ENCODE measurements at regions of chr2 and their contacts with region 1.

Region 1: GRCh38 chr2:196225213-196225612 is 53.8 kb upstream of the STK17B start:
- DNase-seq: no peak
- ATAC-seq: no peak
- H3K4me3 ChIP-seq: no peak overlapping the region
- H3K4me3 Mint-ChIP-seq: peak overlapping the region; percentile 7
- H3K27ac ChIP-seq: no peak overlapping the region
- H3K27ac Mint-ChIP-seq: peak overlapping the region; percentile 46
- H3K4me1 ChIP-seq: peaks cover 30% of the 10 kb centered on the region
- H3K4me1 Mint-ChIP-seq: peaks cover 89% of the 10 kb centered on the region
- H3K27me3 ChIP-seq: no peaks in the 10 kb centered on the region
- H3K27me3 Mint-ChIP-seq: no peaks in the 10 kb centered on the region
- CTCF ChIP-seq: no peak

Region 2: DNA sequence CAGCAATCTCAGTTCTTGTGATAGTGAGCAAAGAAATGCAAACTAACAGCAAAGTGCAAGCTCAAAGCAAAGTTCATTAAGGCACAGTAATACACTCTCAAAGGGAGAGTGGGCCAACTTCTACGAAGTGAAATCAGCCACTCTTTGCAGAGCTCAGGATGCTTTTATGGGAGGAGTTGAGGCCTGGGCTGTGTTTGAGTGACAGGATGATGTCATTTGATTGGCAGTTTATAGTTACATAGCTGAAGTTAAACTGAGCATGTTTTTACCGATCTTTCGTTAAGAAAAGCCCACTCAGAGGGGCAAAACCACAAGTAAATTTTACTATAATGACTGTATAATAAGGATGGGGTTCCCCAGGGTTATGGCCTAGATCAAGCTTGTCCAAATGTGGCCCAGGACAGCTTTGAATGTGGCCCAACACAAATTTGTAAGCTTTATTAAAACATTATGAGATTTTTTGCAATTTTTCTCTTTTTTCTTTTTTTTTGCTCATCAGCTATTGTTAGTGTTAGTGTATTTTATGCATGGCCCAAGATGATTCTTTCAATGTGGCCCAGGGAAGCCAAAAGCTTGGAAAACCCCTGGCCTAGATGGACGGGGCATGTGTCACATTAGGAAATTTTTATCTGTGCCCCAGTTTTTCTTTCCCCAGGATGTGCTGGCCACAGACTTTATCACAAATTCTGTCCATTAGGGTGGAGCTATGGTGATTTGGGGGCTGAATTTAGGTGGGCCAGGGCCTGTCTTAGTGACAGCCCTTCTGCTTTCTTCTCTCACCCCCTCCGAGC is 148.2 kb before region 1 on chr2:
- CTCF ChIA-PET with region 1: interaction called, 8 read pairs
- POLR2A ChIA-PET with region 1: interaction called, 19 read pairs
- intact Hi-C with region 1: loop called in 1 of 2 experiments (anchors 1 kb)
- DNase-seq: no peak
- ATAC-seq: no peak
- H3K4me3 ChIP-seq: no peak overlapping the region
- H3K4me3 Mint-ChIP-seq: no peak overlapping the region
- H3K27ac ChIP-seq: no peak overlapping the region
- H3K27ac Mint-ChIP-seq: no peak overlapping the region
- H3K4me1 ChIP-seq: peaks cover 9% of the 10 kb centered on the region
- H3K4me1 Mint-ChIP-seq: peaks cover 27% of the 10 kb centered on the region
- H3K27me3 ChIP-seq: no peaks in the 10 kb centered on the region
- H3K27me3 Mint-ChIP-seq: no peaks in the 10 kb centered on the region
- CTCF ChIP-seq: no peak

Region 3: DNA sequence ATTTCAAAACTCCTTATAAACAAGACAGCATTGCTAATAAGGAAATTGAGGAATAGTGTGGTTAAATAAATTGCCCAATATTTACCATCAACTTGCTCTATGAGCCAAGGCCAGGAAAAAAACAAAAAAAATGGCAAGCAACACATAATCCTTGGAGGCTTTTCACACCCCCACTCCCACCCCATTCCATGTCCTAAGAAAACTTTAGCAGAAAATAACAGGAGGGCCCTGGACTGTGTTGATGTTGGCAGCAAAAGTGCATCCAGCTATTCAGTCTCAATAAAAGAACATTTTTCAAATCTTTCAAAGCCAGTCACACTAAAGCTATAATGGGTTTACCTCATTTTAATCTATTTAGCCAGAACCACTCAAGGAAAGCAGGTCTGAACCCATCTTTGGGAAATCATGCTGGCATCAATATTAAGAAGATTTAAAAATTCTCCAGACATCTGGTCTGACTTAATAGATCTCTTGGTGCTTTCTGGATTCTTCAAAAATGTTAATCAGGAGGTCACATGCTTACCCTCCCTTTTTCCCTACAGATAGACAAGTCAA is 19.3 kb before region 1 on chr2:
- CTCF ChIA-PET with region 1: interaction called, 8 read pairs
- POLR2A ChIA-PET with region 1: interaction called, 19 read pairs
- intact Hi-C with region 1: loop called in 1 of 2 experiments (anchors 1 kb)
- DNase-seq: no peak
- ATAC-seq: no peak
- H3K4me3 ChIP-seq: no peak overlapping the region
- H3K4me3 Mint-ChIP-seq: no peak overlapping the region
- H3K27ac ChIP-seq: no peak overlapping the region
- H3K27ac Mint-ChIP-seq: peak overlapping the region; percentile 43
- H3K4me1 ChIP-seq: peaks cover 34% of the 10 kb centered on the region
- H3K4me1 Mint-ChIP-seq: peaks cover 45% of the 10 kb centered on the region
- H3K27me3 ChIP-seq: no peaks in the 10 kb centered on the region
- H3K27me3 Mint-ChIP-seq: no peaks in the 10 kb centered on the region
- CTCF ChIP-seq: no peak

Region 4: DNA sequence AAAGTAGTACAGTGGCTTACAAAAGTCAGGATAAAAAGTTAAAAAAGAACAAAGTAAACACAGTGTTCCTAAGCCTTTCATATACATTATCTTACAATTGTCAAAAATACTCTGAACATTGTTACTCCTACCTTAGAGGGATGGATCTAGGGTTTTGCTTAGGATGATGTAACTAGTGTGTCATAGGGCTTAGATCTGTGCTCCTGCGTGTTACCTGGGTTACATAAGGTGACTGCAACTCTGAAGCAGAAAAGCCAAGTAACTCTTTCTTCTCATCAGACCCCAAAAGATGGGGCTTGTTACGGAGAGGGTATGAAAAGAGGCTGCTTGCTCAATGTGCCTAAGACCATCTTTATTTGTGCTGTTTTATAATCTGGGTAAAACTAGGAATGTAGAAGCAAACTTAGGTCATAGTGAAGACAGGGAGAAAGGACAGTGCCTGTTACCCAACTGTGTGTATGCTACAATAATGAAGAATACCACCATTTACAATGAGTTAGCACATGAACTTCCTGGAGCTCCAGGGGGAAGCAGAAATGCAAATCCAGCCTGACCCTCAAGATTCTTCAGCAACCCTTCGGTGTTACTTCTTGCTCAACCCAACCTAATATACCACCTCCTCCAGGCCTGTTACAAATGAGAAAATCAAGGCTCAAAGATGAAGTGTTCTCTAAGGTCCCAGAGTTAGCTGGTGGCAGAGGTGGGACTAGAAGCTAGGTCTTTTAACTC is 11.8 kb before region 1 on chr2:
- CTCF ChIA-PET with region 1: interaction called, 8 read pairs
- POLR2A ChIA-PET with region 1: interaction called, 19 read pairs
- intact Hi-C with region 1: loop called (anchors 1 to 2 kb)
- DNase-seq: peak in 2 of 14 experiments; percentile 66 to 73
- ATAC-seq: no peak
- H3K4me3 ChIP-seq: no peak overlapping the region
- H3K4me3 Mint-ChIP-seq: peak overlapping the region; percentile 26
- H3K27ac ChIP-seq: peak overlapping the region; percentile 6 to 15
- H3K27ac Mint-ChIP-seq: peak overlapping the region; percentile 95
- H3K4me1 ChIP-seq: peaks cover 45% of the 10 kb centered on the region
- H3K4me1 Mint-ChIP-seq: peaks cover 88% of the 10 kb centered on the region
- H3K27me3 ChIP-seq: no peaks in the 10 kb centered on the region
- H3K27me3 Mint-ChIP-seq: no peaks in the 10 kb centered on the region
- CTCF ChIP-seq: no peak

Region 5: DNA sequence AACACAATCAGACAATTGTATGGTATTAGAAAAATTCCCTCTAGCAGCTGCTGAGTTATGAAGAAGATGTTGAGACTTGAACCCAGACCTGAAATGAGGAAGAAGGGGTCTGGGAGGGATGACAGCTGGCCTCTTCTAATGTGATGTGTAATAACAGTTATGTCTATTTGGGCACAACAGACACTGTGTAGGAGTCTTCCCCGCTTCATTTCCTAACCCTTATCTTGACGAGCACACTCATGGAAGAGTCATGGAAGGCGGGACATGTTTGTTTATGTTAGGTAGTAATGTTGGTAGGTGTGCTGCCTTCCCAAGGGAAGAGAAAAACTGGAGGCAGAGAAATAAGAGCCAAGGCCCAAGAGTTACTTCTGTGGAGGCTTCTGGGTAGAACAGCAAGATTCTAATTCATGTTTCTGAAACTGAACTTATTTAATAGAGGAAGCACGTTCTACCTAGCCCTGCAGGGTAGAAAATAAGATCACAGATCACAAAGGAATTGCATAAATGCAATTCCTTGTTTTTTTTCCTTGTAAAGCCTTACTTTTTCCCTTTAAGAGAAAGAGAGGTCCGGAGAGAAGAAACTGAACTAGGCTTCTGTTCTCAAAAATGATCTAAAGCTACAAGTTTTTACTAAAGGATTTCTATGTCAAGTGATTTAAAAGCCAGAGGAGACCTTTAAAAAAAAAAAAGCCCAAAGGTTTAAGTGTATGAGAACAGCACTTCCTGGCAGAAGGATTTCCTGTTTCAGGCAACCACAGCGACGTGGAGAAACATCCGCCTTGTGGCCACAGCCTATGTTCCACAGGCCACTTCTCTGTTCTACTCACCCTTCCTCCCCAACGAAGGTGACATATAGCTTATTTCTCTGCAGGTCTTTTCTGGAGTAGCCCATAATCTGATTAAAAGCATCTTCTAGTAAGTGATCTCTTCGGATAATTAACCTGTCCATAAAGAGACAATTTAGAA is 14.7 kb after region 1 on chr2:
- CTCF ChIA-PET with region 1: interaction called, 9 read pairs
- POLR2A ChIA-PET with region 1: interaction called, 30 read pairs
- intact Hi-C with region 1: loop called in 1 of 2 experiments (anchors 1 kb)
- DNase-seq: peak; percentile 57 to 95 (median 73)
- ATAC-seq: peak; percentile 80
- H3K4me3 ChIP-seq: peak overlapping the region; percentile 13
- H3K4me3 Mint-ChIP-seq: peak overlapping the region; percentile 83
- H3K27ac ChIP-seq: peak overlapping the region; percentile 54 to 76
- H3K27ac Mint-ChIP-seq: peak overlapping the region; percentile 95
- H3K4me1 ChIP-seq: peaks cover 57% of the 10 kb centered on the region
- H3K4me1 Mint-ChIP-seq: peaks cover 79% of the 10 kb centered on the region
- H3K27me3 ChIP-seq: no peaks in the 10 kb centered on the region
- H3K27me3 Mint-ChIP-seq: no peaks in the 10 kb centered on the region
- CTCF ChIP-seq: no peak

Region 6: GRCh38 chr2:196263181-196263747 is 38.1 kb after region 1 on chr2:
- CTCF ChIA-PET with region 1: interaction called, 3 read pairs
- POLR2A ChIA-PET with region 1: interaction called, 21 read pairs
- intact Hi-C with region 1: loop called in 1 of 2 experiments (anchors 5 kb)
- DNase-seq: peak in 11 of 14 experiments; percentile 14 to 87 (median 42)
- ATAC-seq: peak; percentile 79
- H3K4me3 ChIP-seq: peak overlapping the region; percentile 28
- H3K4me3 Mint-ChIP-seq: peak overlapping the region; percentile 43
- H3K27ac ChIP-seq: peak overlapping the region; percentile 79 to 85
- H3K27ac Mint-ChIP-seq: peak overlapping the region; percentile 84
- H3K4me1 ChIP-seq: peaks cover 48% of the 10 kb centered on the region
- H3K4me1 Mint-ChIP-seq: peaks cover 88% of the 10 kb centered on the region
- H3K27me3 ChIP-seq: no peaks in the 10 kb centered on the region
- H3K27me3 Mint-ChIP-seq: no peaks in the 10 kb centered on the region
- CTCF ChIP-seq: no peak

Region 7: GRCh38 chr2:196337208-196337953 is 112.2 kb after region 1 on chr2:
- CTCF ChIA-PET with region 1: interaction called, 4 read pairs
- POLR2A ChIA-PET with region 1: interaction called, 4 read pairs
- intact Hi-C with region 1: loop called in 1 of 2 experiments (anchors 5 kb)
- DNase-seq: peak in 8 of 14 experiments; percentile 7 to 64 (median 27)
- ATAC-seq: peak; percentile 39
- H3K4me3 ChIP-seq: no peak overlapping the region
- H3K4me3 Mint-ChIP-seq: no peak overlapping the region
- H3K27ac ChIP-seq: no peak overlapping the region
- H3K27ac Mint-ChIP-seq: no peak overlapping the region
- H3K4me1 ChIP-seq: no peaks in the 10 kb centered on the region
- H3K4me1 Mint-ChIP-seq: no peaks in the 10 kb centered on the region
- H3K27me3 ChIP-seq: no peaks in the 10 kb centered on the region
- H3K27me3 Mint-ChIP-seq: no peaks in the 10 kb centered on the region
- CTCF ChIP-seq: peak; percentile 71

Region 8: DNA sequence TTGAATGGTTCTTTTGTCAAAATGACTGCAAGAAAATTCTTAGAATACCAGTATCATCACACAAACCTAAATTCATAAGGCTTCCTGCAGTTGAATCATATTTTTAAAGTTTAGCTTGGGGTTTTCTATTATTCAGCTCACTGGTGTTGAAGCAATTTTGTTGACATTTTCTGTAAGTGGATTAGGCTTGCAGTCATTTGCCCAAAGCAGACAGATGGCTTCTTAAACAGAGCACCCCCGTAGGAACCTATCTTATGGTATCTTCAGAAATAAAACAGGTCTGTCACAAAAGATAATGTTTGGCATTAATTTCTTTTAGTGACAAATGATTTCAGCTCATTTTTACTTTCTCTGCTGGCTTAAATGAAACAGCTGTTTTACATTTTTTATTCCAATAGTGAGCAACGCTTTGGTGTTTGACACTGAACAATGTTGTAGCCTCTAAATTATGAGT is 1910.3 kb after region 1 on chr2:
- CTCF ChIA-PET with region 1: no interaction called
- POLR2A ChIA-PET with region 1: no interaction called
- intact Hi-C with region 1: no loop called
- DNase-seq: no peak
- ATAC-seq: no peak
- H3K4me3 ChIP-seq: no peak overlapping the region
- H3K4me3 Mint-ChIP-seq: no peak overlapping the region
- H3K27ac ChIP-seq: no peak overlapping the region
- H3K27ac Mint-ChIP-seq: no peak overlapping the region
- H3K4me1 ChIP-seq: no peaks in the 10 kb centered on the region
- H3K4me1 Mint-ChIP-seq: no peaks in the 10 kb centered on the region
- H3K27me3 ChIP-seq: no peaks in the 10 kb centered on the region
- H3K27me3 Mint-ChIP-seq: no peaks in the 10 kb centered on the region
- CTCF ChIP-seq: no peak